Panc1 (cell line): ENCODE measurements at regions of chr7 and their contacts with region 1.

Region 1: GRCh38 chr7:129401967-129402860 is 32.0 kb upstream of the STRIP2 start:
- DNase-seq: peak; percentile 30
- ATAC-seq: peak; percentile 71; the same call in 1 of the 2 replicates
- H3K4me3 ChIP-seq: no peak overlapping the region
- H3K27ac ChIP-seq: no peak overlapping the region
- H3K4me1 ChIP-seq: peaks cover 6% of the 10 kb centered on the region; the same call in 1 of the 2 replicates
- H3K27me3 ChIP-seq: no peaks in the 10 kb centered on the region
- CTCF ChIP-seq: no peak; the same call in none of the 2 replicates

Region 2: GRCh38 chr7:128890306-128891109 is 511.7 kb before region 1 on chr7:
- CTCF ChIA-PET with region 1: interaction called, 12 read pairs
- POLR2A ChIA-PET with region 1: no interaction called
- in situ Hi-C with region 1: no loop called
- intact Hi-C with region 1: no loop called
- DNase-seq: no peak
- ATAC-seq: peak; percentile 71
- H3K4me3 ChIP-seq: peak overlapping the region; percentile 29 to 32
- H3K27ac ChIP-seq: no peak overlapping the region
- H3K4me1 ChIP-seq: no peaks in the 10 kb centered on the region; the same call in 1 of the 2 replicates
- H3K27me3 ChIP-seq: no peaks in the 10 kb centered on the region
- CTCF ChIP-seq: no peak

Region 3: GRCh38 chr7:129450295-129450694 is 48.1 kb after region 1 on chr7:
- CTCF ChIA-PET with region 1: no interaction called
- POLR2A ChIA-PET with region 1: no interaction called
- in situ Hi-C with region 1: no loop called
- intact Hi-C with region 1: no loop called
- DNase-seq: no peak
- ATAC-seq: no peak
- H3K4me3 ChIP-seq: no peak overlapping the region
- H3K27ac ChIP-seq: no peak overlapping the region
- H3K4me1 ChIP-seq: no peaks in the 10 kb centered on the region
- H3K27me3 ChIP-seq: no peaks in the 10 kb centered on the region
- CTCF ChIP-seq: no peak